ENCODE measurements at regions of chr4 and their contacts with region 1.

Region 1: GRCh38 chr4:83231620-83232076 is 53.0 kb downstream of the COQ2 start:
- DNase-seq: no peak
- H3K4me3 ChIP-seq: no peak overlapping the region
- H3K27ac ChIP-seq: no peak overlapping the region
- H3K4me1 ChIP-seq: no peaks in the 10 kb centered on the region
- H3K27me3 ChIP-seq: no peaks in the 10 kb centered on the region
- CTCF ChIP-seq: no peak

Region 2: DNA sequence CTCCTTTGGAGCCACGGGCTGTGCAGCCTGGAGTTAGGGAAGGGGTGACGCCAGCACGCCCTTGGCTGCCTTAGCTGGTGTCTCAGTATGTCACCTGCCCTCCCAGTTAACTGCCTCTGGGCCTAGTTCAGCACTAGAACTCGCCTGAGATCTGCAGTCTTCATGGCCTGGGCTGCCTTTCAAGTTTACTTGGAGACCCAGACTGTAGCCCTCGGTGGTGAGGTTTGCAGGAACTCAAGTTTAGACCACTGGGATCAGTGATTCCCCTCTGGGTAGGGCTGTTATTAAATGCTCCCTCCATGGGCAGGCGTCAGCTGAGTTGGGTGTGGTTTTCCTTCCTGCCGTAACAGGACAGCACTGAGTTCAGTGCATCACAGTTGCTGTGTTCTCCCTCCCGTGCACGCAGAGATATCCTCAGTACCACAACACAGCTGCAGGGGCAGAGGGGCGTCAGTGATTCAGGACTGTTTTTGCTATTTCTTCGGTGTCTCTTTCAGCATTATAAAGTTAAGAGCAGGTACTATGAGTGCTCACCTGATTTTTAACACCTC is 147.6 kb before region 1 on chr4:
- intact Hi-C with region 1: loop called (anchors 10 kb)
- DNase-seq: no peak
- H3K4me3 ChIP-seq: no peak overlapping the region
- H3K27ac ChIP-seq: no peak overlapping the region
- H3K4me1 ChIP-seq: no peaks in the 10 kb centered on the region
- H3K27me3 ChIP-seq: no peaks in the 10 kb centered on the region
- CTCF ChIP-seq: no peak

Region 3: DNA sequence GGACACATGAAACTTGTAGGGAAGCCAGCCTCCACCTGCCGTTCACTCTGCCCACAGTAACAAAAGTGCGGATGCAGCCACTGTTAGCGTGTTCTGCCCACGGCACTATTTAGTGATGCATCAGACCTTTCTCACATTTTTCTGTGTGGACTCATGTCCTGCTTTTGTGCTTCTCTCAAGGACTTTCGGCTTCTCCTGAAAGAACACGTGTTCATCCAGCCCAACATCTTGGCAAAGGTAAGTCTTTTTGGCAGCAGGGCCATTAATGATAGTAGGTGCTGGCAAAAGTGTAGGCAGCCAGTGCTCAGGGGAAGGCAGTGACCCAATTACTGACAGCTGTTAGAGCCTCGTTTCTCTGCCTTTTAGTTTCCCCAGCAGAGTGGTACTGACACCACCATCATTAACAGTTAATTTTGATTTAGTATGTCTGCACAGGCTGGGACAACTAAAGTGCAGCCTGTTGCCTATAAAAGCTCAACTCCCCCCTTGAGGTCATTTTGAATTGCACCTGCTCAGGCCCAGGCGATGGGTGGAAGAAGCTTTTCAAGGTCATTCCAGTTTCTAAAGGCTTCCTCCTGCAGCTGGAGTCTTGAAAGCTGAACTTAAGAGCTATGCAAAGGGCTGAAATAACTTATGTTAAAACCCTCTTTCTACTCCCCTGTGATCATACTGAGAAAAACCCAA is 157.5 kb after region 1 on chr4:
- intact Hi-C with region 1: no loop called
- DNase-seq: peak in 2 of 5 donors; percentile 25 to 37
- H3K4me3 ChIP-seq: no peak overlapping the region
- H3K27ac ChIP-seq: no peak overlapping the region
- H3K4me1 ChIP-seq: peaks cover 0 to 3% (median 0%) of the 10 kb centered on the region in 3 donors
- H3K27me3 ChIP-seq: no peaks in the 10 kb centered on the region
- CTCF ChIP-seq: no peak

Measured in kidney (tissue), 22 donors.